Activated CD4-positive, alpha-beta T cell treated with anti-CD3 and anti-CD28 coated beads, Interleukin-2, amount 10 ng/mL, durations not matched to agents 24 days and 14 days (primary cell): ENCODE measurements at regions of chr3 and their contacts with region 1.

Region 1: GRCh38 chr3:125916376-125916978 is 52.5 kb upstream of the ROPN1B start:
- DNase-seq: peak; percentile 98
- H3K4me3 Mint-ChIP-seq: peak overlapping the region; percentile 92
- H3K27ac Mint-ChIP-seq: peak overlapping the region; percentile 84
- H3K4me1 Mint-ChIP-seq: peaks cover 20% of the 10 kb centered on the region
- H3K27me3 Mint-ChIP-seq: no peaks in the 10 kb centered on the region

Region 2: DNA sequence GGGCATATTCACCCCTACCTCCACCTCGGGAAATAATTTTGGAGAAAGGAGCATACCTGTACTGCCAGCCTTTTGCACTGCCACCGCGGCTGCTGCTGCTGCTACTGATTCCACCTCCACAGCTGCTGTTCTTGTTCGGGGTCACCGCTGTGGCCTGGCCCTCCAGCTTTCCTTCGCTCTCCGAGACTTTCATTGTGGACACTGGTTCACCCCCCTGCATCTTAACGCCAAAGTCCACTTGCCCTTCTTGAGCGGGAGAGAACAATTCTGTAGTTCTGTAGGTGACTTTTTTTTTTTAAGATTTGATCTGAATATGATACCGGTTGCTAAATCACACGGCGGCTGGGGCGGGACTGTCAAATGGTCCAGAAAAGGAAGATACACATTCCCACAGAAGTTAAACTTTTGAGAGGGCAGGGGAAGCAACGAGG is 321.9 kb before region 1 on chr3:
- intact Hi-C with region 1: loop called (anchors 10 kb)
- DNase-seq: no peak
- H3K4me3 Mint-ChIP-seq: peak overlapping the region; percentile 90
- H3K27ac Mint-ChIP-seq: peak overlapping the region; percentile 85
- H3K4me1 Mint-ChIP-seq: peaks cover 21% of the 10 kb centered on the region
- H3K27me3 Mint-ChIP-seq: no peaks in the 10 kb centered on the region

Region 3: GRCh38 chr3:125767641-125768040 is 148.8 kb before region 1 on chr3:
- intact Hi-C with region 1: loop called (anchors 10 kb)
- DNase-seq: no peak
- H3K4me3 Mint-ChIP-seq: peak overlapping the region; percentile 75
- H3K27ac Mint-ChIP-seq: no peak overlapping the region
- H3K4me1 Mint-ChIP-seq: peaks cover 6% of the 10 kb centered on the region
- H3K27me3 Mint-ChIP-seq: peaks cover 22% of the 10 kb centered on the region

Region 4: GRCh38 chr3:125990253-125990970 is 73.9 kb after region 1 on chr3:
- intact Hi-C with region 1: loop called (anchors 2 kb)
- DNase-seq: peak; percentile 93
- H3K4me3 Mint-ChIP-seq: peak overlapping the region; percentile 93
- H3K27ac Mint-ChIP-seq: peak overlapping the region; percentile 93
- H3K4me1 Mint-ChIP-seq: peaks cover 7% of the 10 kb centered on the region
- H3K27me3 Mint-ChIP-seq: peaks cover 12% of the 10 kb centered on the region

Region 5: DNA sequence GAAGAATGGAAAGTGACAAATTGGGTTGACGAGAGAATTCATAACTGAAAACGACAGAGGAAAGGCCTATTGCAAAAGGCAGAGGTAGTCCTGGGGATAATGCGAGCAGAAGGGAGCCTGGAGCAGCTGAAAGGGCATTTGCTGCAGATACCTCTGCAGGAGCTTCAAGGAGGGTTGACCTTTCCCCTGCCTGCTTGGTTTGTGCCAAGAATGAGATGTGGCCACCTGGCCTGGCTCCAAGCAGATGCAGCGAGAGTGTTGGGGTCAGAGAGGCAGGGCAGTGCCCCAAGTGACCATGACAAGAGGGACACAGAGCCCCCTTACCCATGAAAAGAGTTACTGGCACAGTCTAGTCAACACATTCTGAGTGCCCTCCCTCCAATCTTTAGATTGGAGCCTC is 123.9 kb after region 1 on chr3:
- intact Hi-C with region 1: no loop called
- DNase-seq: no peak
- H3K4me3 Mint-ChIP-seq: no peak overlapping the region
- H3K27ac Mint-ChIP-seq: no peak overlapping the region
- H3K4me1 Mint-ChIP-seq: no peaks in the 10 kb centered on the region
- H3K27me3 Mint-ChIP-seq: no peaks in the 10 kb centered on the region

Region 6: DNA sequence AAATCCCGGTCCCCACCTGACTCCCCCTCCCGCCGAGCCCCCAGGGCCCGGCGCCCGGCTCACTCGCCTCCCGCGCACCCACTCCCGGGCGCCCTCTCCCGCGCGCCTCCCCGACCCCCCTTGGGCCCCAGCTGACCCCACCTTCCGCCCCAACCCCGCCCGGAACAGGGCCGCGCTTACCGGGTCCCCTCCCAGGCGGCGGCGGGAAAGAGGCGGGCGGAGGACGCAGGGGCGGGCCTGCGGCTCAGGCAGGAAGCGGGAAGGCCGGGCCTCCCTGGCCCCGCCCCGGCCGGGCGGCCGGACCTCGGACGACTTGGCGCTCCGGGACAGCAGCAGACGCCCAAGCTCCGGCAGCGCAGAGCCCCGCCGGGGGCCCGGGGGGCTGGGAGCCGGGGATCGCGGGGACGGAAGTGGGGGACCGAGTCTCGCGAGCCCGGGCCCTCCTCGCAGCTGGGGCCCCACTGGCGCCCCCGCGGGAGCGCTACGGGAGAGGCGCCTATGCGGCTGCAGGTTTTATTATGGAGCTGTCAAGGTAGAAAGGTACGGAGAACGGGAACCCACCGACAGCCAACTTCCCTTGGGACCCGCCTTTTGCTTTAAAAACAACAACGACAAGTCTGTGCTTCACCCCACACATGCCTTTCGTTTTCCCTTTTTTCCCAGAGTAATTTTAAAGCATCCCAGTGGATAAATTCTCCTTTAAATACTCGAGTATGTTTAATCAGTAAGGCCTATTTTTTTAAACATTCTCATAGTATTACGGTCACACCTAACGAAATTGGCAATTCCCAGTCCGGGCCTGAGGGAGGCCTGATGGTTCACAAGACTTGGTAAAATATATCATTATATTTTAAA is 167.7 kb after region 1 on chr3 and contains the start of gene SLC41A3:
- intact Hi-C with region 1: loop called (anchors 2 kb)
- DNase-seq: peak; percentile 97
- H3K4me3 Mint-ChIP-seq: peak within 1 kb of the TSS; percentile 85
- H3K27ac Mint-ChIP-seq: peak within 1 kb of the TSS; percentile 87
- H3K4me1 Mint-ChIP-seq: peaks cover 15% of the 10 kb centered on the region
- H3K27me3 Mint-ChIP-seq: no peaks in the 10 kb centered on the region
- total RNA-seq, gene SLC41A3: 17.9 and 20.1 TPM in 2 replicates

Region 7: GRCh38 chr3:126357295-126358037 is 441.0 kb after region 1 on chr3 and contains the start of gene KLF15:
- intact Hi-C with region 1: loop called (anchors 5 kb)
- DNase-seq: peak; percentile 93
- H3K4me3 Mint-ChIP-seq: peak within 1 kb of the TSS; percentile 86
- H3K27ac Mint-ChIP-seq: peak within 1 kb of the TSS; percentile 62
- H3K4me1 Mint-ChIP-seq: peaks cover 7% of the 10 kb centered on the region
- H3K27me3 Mint-ChIP-seq: peaks cover 44% of the 10 kb centered on the region
- total RNA-seq, gene KLF15: 0.19 and 0.28 TPM in 2 replicates